ENCODE measurements at regions of chrX and their contacts with region 1.

Region 1: GRCh38 chrX:39149761-39150160 is 348.5 kb downstream of the MID1IP1 start:
- DNase-seq: peak; percentile 65
- H3K4me3 ChIP-seq: no peak overlapping the region
- H3K27ac ChIP-seq: no peak overlapping the region
- H3K4me1 ChIP-seq: peaks cover 9% of the 10 kb centered on the region
- CTCF ChIP-seq: peak; percentile 80

Region 2: DNA sequence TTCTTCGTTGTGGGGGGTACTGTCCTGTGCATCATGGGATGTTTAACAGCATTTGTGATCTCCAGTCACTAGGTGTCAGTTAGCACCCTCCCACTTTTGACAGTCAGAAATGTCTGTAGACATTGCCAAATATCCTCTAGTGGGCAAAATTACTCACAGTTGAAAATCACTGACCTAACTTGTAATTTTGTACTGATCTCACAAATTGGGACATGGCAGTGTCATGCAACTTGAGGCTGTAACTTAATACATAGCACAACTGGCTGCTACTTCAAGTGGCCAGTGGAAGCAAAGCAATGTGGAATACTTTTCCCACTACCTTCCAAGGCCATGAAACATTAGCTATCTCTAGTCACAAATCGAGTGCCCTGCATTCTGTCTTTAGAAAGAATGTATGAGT is 611.6 kb before region 1 on chrX:
- CTCF ChIA-PET with region 1: no interaction called
- POLR2A ChIA-PET with region 1: no interaction called
- intact Hi-C with region 1: no loop called
- DNase-seq: no peak
- H3K4me3 ChIP-seq: no peak overlapping the region
- H3K27ac ChIP-seq: no peak overlapping the region
- H3K4me1 ChIP-seq: no peaks in the 10 kb centered on the region
- CTCF ChIP-seq: no peak

Region 3: DNA sequence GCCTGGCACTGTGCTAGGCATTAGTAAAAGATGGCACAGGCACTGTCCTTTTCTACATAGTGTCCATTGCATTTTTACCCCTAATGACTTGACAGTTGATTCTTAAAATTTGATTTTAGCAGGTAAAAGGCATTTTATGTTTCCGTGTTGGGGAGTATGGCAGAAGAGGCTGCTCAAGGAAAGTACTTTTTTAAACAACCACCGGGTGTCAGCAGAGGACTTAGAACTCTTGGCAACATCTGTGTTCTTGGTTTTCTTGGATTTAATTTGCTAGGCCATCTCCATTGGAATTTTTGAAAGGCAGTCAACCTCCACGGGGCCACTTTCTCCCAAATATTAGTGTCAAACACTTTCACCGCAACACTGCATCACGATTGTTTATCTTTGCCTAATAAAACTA is 485.5 kb before region 1 on chrX:
- CTCF ChIA-PET with region 1: no interaction called
- POLR2A ChIA-PET with region 1: no interaction called
- intact Hi-C with region 1: loop called (anchors 5 kb)
- DNase-seq: peak; percentile 13
- H3K4me3 ChIP-seq: no peak overlapping the region
- H3K27ac ChIP-seq: no peak overlapping the region
- H3K4me1 ChIP-seq: peaks cover 2% of the 10 kb centered on the region
- CTCF ChIP-seq: peak; percentile 59

Region 4: GRCh38 chrX:38754102-38754790 is 395.5 kb before region 1 on chrX:
- CTCF ChIA-PET with region 1: no interaction called
- POLR2A ChIA-PET with region 1: no interaction called
- intact Hi-C with region 1: loop called (anchors 5 kb)
- DNase-seq: peak; percentile 48
- H3K4me3 ChIP-seq: no peak overlapping the region
- H3K27ac ChIP-seq: no peak overlapping the region
- H3K4me1 ChIP-seq: no peaks in the 10 kb centered on the region
- CTCF ChIP-seq: peak; percentile 84

Region 5: DNA sequence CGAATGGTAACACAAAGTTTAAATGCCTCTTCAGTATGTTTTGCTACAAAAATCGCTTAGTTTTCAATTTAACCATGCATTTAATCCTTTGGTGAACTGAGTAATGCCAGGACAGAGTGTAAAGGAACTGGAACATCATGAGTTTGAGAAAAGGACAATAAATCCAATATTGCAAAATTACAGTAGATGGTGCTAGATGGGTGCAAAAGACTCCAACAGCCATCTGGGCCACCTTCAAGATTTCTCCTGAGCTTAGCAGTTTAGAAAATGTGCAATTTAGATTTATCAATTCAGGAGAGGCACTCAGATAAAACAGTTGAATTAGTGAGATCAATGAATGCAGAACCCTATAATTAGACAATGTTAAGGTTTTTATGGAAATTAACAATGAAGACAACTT is 381.7 kb before region 1 on chrX:
- CTCF ChIA-PET with region 1: interaction called, 3 read pairs
- POLR2A ChIA-PET with region 1: no interaction called
- intact Hi-C with region 1: loop called (anchors 1 kb)
- DNase-seq: peak; percentile 33
- H3K4me3 ChIP-seq: no peak overlapping the region
- H3K27ac ChIP-seq: no peak overlapping the region
- H3K4me1 ChIP-seq: no peaks in the 10 kb centered on the region
- CTCF ChIP-seq: peak; percentile 70

Region 6: DNA sequence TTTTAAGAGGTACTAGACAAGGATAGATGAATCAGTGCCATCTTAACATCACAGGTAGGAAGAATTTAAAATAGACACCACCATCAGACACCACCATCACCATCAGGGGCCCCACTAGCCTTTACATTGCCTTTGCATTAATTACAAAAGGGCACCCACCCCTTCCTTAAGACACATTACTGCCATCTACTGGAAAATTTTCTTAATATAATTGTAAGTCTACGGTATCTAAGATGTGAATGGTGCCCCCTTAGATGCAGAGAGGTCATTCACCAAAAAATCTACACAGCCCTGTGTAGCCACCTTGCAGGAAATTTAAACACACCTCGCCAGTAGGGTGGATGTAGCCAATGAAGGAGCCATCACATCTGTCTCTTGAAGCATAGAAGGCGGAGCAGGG is 164.4 kb before region 1 on chrX:
- CTCF ChIA-PET with region 1: no interaction called
- POLR2A ChIA-PET with region 1: no interaction called
- intact Hi-C with region 1: loop called (anchors 5 kb)
- DNase-seq: peak; percentile 75
- H3K4me3 ChIP-seq: no peak overlapping the region
- H3K27ac ChIP-seq: no peak overlapping the region
- H3K4me1 ChIP-seq: peaks cover 4% of the 10 kb centered on the region
- CTCF ChIP-seq: peak; percentile 70

Region 7: GRCh38 chrX:39096599-39096998 is 53.2 kb before region 1 on chrX:
- CTCF ChIA-PET with region 1: no interaction called
- POLR2A ChIA-PET with region 1: no interaction called
- intact Hi-C with region 1: loop called (anchors 10 kb)
- DNase-seq: no peak
- H3K4me3 ChIP-seq: no peak overlapping the region
- H3K27ac ChIP-seq: no peak overlapping the region
- H3K4me1 ChIP-seq: no peaks in the 10 kb centered on the region
- CTCF ChIP-seq: no peak

Region 8: GRCh38 chrX:39133971-39134370 is 15.8 kb before region 1 on chrX:
- CTCF ChIA-PET with region 1: no interaction called
- POLR2A ChIA-PET with region 1: interaction called, 4 read pairs
- intact Hi-C with region 1: loop called (anchors 1 kb)
- DNase-seq: peak; percentile 24
- H3K4me3 ChIP-seq: no peak overlapping the region
- H3K27ac ChIP-seq: no peak overlapping the region
- H3K4me1 ChIP-seq: no peaks in the 10 kb centered on the region
- CTCF ChIP-seq: peak; percentile 59

Region 9: DNA sequence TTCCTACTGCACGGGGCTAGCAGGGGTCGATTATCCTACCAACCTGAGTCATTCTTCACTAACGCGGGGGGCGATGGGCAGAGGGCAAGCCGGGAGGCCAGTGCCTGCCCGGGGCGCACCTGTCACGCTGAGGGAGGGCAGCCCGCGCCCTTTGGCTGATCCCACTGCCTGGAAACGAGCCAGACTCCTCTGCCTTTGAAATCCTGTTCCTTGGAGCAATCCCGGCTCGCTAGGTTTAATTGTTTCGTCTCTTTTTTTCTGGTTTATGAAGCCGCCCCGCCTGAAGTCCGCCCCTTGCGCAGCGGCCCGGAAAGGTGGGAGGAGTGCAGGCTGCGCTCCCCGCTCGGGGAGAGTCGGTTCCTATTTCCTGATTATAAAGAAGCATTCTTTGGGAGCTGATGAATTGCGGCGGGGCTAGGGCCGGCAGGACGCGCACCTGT is 463.7 kb after region 1 on chrX:
- CTCF ChIA-PET with region 1: no interaction called
- POLR2A ChIA-PET with region 1: no interaction called
- intact Hi-C with region 1: no loop called
- DNase-seq: peak; percentile 5
- H3K4me3 ChIP-seq: peak overlapping the region; percentile 55
- H3K27ac ChIP-seq: no peak overlapping the region
- H3K4me1 ChIP-seq: no peaks in the 10 kb centered on the region
- CTCF ChIP-seq: no peak